Activated CD8-positive, alpha-beta T cell treated with anti-CD3 and anti-CD28 coated beads, Interleukin-2, amount 10 ng/mL, durations not matched to agents 7 days and 5 days (primary cell): ENCODE measurements at regions of chr1 and their contacts with region 1.

Region 1: GRCh38 chr1:28736450-28737306 is at the start of gene YTHDF2:
- DNase-seq: peak; percentile 98
- ATAC-seq: peak; percentile 97
- H3K4me3 Mint-ChIP-seq: peak within 1 kb of the TSS; percentile 97
- H3K27ac Mint-ChIP-seq: peak within 1 kb of the TSS; percentile 94
- H3K4me1 Mint-ChIP-seq: peaks cover 38% of the 10 kb centered on the region
- H3K27me3 Mint-ChIP-seq: no peaks in the 10 kb centered on the region
- total RNA-seq, gene YTHDF2: 67.3 to 80.6 TPM

Region 2: GRCh38 chr1:28642847-28643635 is 93.6 kb before region 1 on chr1 and contains the start of gene TAF12:
- CTCF ChIA-PET with region 1: interaction called, 36 read pairs
- POLR2A ChIA-PET with region 1: interaction called, 59 read pairs
- DNase-seq: peak; percentile 94
- ATAC-seq: peak; percentile 90
- H3K4me3 Mint-ChIP-seq: peak within 1 kb of the TSS; percentile 99
- H3K27ac Mint-ChIP-seq: peak within 1 kb of the TSS; percentile 99
- H3K4me1 Mint-ChIP-seq: peaks cover 51% of the 10 kb centered on the region
- H3K27me3 Mint-ChIP-seq: no peaks in the 10 kb centered on the region
- total RNA-seq, gene TAF12: 35.7 to 39.3 TPM

Region 3: DNA sequence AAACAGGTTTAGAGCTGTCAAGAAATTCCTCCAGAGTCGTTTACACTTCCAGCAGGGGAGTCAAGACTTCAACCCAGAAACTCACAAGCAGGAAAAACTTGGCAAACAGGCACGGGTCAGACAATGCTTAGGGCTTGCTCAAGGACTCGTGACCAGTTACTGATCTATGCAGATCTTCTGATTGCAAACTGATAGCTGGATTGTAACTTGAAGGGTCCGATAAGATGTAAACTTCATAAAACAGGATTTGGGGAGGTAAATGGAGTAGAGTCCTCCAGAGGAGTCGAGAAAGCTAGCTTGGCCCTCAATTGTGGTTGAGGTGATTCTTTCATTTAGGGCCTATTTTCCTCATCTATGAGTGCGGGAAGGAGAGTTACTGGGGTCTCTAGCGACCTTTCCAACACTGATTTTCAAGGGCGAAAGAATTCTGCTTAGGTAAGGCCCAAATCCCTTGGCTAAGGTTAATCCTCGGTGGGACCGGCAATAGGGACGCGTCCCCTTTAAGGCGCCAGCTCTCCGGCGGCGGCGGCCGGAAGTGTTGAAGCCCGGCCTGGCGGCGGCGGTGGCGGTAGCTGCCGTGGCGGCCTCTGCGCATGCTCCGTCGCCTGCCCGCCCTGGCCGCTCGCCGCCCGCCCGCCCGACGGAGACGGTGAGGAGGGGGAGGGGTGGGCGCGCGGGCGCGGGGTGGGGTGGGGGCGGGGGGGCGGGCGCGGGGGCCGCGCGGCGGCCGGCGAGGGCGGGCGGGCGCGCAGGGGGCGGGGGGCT is 68.3 kb before region 1 on chr1 and contains the start of gene GMEB1:
- CTCF ChIA-PET with region 1: interaction called, 26 read pairs
- POLR2A ChIA-PET with region 1: interaction called, 38 read pairs
- DNase-seq: peak; percentile 89
- ATAC-seq: peak; percentile 76
- H3K4me3 Mint-ChIP-seq: peak within 1 kb of the TSS; percentile 87
- H3K27ac Mint-ChIP-seq: peak within 1 kb of the TSS; percentile 96
- H3K4me1 Mint-ChIP-seq: peaks cover 10% of the 10 kb centered on the region
- H3K27me3 Mint-ChIP-seq: no peaks in the 10 kb centered on the region
- total RNA-seq, gene GMEB1: 35.5 to 36.4 TPM

Region 4: DNA sequence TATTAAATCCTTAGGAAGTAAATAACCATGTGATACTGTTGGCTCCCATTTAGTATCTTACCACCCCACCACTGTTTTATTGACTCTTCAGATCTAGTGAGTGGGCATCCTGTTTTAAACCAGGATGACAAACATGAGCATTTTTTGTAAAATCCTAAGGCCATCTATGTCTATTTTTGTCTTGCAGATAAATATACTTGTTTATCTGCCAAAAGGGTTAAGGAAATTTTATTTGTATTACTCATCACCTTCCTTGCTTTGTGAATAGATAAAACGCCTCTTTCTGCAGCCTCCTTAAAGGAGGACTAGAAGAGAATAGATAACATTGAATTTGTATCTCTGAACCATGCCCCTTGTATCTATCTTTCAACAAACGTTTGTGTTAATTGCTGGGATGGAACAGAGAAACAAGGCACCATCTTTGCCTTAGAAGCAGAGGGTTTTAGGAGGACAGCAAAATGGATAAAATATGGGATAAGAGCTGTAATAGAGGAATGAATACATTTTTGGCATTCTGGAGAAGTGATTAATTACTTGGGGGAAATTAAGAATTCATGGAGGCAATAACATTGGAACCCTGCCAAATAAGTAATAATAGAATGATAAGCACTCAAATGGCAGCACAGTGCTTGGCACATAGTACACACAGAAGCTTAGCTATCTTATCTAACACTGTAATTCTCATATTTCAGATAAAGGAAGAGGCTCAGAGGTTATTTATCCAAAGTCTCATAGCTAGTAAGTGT is 14.8 kb after region 1 on chr1:
- CTCF ChIA-PET with region 1: interaction called, 18 read pairs
- POLR2A ChIA-PET with region 1: interaction called, 11 read pairs
- DNase-seq: no peak
- ATAC-seq: no peak
- H3K4me3 Mint-ChIP-seq: no peak overlapping the region
- H3K27ac Mint-ChIP-seq: no peak overlapping the region
- H3K4me1 Mint-ChIP-seq: peaks cover 45% of the 10 kb centered on the region
- H3K27me3 Mint-ChIP-seq: no peaks in the 10 kb centered on the region

Region 5: DNA sequence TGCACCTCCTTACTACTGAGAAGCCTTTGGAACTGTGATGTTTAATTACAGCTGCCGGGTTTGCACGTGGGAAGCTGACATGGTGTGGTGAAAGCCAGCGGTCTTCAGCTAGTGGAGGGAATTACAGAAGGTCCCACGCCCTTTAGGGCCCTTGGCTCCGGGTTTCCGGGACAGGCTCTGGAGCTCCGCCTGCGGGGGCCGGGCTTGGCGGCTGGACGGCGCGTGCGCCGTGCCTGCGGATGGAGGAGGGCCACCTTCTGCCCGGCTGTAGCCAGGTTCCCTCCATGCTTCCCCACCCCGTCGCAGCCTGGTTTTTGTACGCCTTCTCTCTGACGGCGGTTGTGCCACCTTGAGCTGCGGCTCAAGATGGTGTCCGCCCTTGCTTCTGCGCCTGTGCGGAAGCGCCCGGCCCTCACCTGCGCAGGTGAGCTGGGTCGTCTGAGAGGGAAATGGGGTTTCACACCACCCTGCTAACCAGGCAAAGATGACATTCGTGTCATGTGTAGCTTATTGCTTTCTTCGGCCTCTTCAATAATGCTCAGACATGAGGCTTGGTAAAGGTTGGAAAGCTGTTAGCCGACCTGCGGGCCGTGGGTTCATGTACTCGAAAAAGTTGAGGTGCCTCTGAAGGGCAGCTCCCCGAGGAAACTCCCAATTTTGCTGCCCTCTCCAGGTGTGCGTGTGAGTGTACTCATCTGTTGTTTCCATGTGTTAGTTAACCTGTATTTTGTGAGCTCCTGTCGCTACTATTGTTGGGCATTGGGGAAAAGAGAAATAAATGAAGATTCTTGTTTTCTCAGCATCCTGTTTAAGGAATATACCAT is 38.7 kb after region 1 on chr1:
- CTCF ChIA-PET with region 1: interaction called, 14 read pairs
- POLR2A ChIA-PET with region 1: interaction called, 7 read pairs
- DNase-seq: peak; percentile 71
- ATAC-seq: peak; percentile 95
- H3K4me3 Mint-ChIP-seq: peak overlapping the region; percentile 63
- H3K27ac Mint-ChIP-seq: peak overlapping the region; percentile 43
- H3K4me1 Mint-ChIP-seq: peaks cover 11% of the 10 kb centered on the region
- H3K27me3 Mint-ChIP-seq: peaks cover 3% of the 10 kb centered on the region

Region 6: GRCh38 chr1:28895896-28896608 is 159.4 kb after region 1 on chr1:
- CTCF ChIA-PET with region 1: no interaction called
- POLR2A ChIA-PET with region 1: no interaction called
- DNase-seq: no peak
- ATAC-seq: no peak
- H3K4me3 Mint-ChIP-seq: no peak overlapping the region
- H3K27ac Mint-ChIP-seq: no peak overlapping the region
- H3K4me1 Mint-ChIP-seq: peaks cover 9% of the 10 kb centered on the region
- H3K27me3 Mint-ChIP-seq: no peaks in the 10 kb centered on the region

Region 7: DNA sequence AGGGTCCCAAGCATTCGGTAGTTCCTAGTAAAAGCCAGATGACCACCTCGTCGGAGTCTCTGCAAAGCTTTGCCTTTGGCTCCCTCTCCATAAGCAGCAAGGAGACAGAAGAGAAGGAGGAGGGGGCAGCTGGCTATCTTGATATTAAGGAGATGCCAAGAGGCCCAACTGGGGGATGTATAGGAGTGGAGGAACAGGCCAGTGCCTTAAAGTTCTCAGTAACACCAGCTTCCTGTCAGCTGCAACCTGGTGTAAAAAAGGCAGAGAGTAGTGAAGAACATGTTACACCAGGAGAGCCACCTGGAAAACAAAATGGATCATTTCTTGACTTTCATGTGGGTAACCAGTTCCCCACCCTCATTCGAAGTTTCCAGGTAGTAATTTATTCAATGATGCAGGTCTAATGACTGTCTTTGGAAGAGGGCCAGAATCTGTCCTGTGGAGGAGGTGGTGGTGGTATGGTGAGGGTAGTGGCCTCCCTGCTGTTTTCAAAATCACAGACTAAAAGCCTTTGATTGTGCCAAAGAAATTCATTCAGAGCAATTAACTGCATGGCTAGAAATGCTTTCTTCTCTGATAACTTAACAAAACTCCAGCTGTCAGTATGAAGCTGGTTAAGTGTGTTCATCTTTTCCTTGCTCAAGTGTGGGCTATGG is 359.7 kb after region 1 on chr1:
- CTCF ChIA-PET with region 1: no interaction called
- POLR2A ChIA-PET with region 1: no interaction called
- DNase-seq: no peak
- ATAC-seq: no peak
- H3K4me3 Mint-ChIP-seq: no peak overlapping the region
- H3K27ac Mint-ChIP-seq: no peak overlapping the region
- H3K4me1 Mint-ChIP-seq: peaks cover 3% of the 10 kb centered on the region
- H3K27me3 Mint-ChIP-seq: no peaks in the 10 kb centered on the region